ENCODE measurements at regions of chr6 and their contacts with region 1.

Region 1: GRCh38 chr6:111057074-111057752 is 30.1 kb upstream of the SLC16A10 start:
- DNase-seq: peak; percentile 36 to 70
- H3K4me3 ChIP-seq: no peak overlapping the region
- H3K27ac ChIP-seq: no peak overlapping the region
- H3K4me1 ChIP-seq: no peaks in the 10 kb centered on the region
- H3K27me3 ChIP-seq: no peaks in the 10 kb centered on the region
- CTCF ChIP-seq: peak in 5 of 7 experiments; percentile 64 to 84 (median 67)
- EP300 ChIP-seq: no peak
- POLR2A ChIP-seq: no peak

Region 2: GRCh38 chr6:110681543-110682459 is 375.4 kb before region 1 on chr6:
- intact Hi-C with region 1: no loop called
- DNase-seq: peak in 1 of 2 donors; percentile 21
- H3K4me3 ChIP-seq: no peak overlapping the region
- H3K27ac ChIP-seq: peak overlapping the region in 2 of 5 donors; percentile 1 to 16
- H3K4me1 ChIP-seq: peaks cover 0 to 19% (median 11%) of the 10 kb centered on the region in 4 donors
- H3K27me3 ChIP-seq: no peaks in the 10 kb centered on the region
- CTCF ChIP-seq: no peak
- EP300 ChIP-seq: no peak
- POLR2A ChIP-seq: no peak

Region 3: GRCh38 chr6:110693271-110693670 is 363.9 kb before region 1 on chr6:
- intact Hi-C with region 1: no loop called
- DNase-seq: no peak
- H3K4me3 ChIP-seq: no peak overlapping the region
- H3K27ac ChIP-seq: no peak overlapping the region
- H3K4me1 ChIP-seq: peaks cover 5 to 13% (median 9%) of the 10 kb centered on the region in 4 donors
- H3K27me3 ChIP-seq: no peaks in the 10 kb centered on the region
- CTCF ChIP-seq: no peak
- EP300 ChIP-seq: no peak
- POLR2A ChIP-seq: no peak

Region 4: DNA sequence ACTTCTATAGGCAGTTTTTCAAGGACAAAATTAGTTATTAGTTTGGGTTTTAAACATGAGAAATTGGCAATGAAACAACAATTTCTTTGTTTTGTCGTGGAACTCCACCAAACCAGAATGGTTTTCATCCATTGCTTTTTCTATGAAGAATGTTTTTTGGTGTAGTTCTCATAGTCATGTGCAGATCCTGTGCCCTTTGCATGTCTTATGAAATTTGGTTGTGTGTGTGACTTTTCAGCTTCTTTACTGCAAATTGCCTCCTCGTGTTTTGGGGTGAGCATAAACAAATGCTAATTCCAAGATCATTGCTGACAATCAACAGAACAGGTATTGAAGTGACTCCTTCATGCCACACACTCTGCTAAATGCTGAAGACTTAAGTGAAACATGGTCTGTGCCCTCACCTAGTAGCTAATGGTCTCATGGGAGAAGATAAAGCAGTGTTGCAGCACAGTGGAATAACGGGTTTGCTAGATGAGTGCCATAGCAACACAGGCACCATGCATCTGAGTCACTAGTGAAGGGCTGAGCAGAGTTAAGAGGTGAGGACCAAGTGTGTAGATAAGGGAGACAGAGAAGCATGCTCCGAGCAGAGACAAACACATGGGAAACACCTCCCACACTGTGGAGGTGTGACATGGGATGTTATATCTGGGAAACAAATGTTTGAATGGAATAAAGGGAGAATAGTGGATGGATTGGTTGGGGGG is 150.1 kb after region 1 on chr6:
- intact Hi-C with region 1: loop called (anchors 10 kb)
- DNase-seq: peak in 1 of 2 donors; percentile 24
- H3K4me3 ChIP-seq: no peak overlapping the region
- H3K27ac ChIP-seq: no peak overlapping the region
- H3K4me1 ChIP-seq: peaks cover 0 to 20% (median 5%) of the 10 kb centered on the region in 4 donors
- H3K27me3 ChIP-seq: no peaks in the 10 kb centered on the region
- CTCF ChIP-seq: no peak
- EP300 ChIP-seq: no peak
- POLR2A ChIP-seq: no peak

Measured in stomach (tissue), 19 donors.